OCI-LY7 (cell line): ENCODE measurements at regions of chr18 and their contacts with region 1.

Region 1: GRCh38 chr18:61635901-61636528 is 256.8 kb downstream of the RNF152 start:
- DNase-seq: peak; percentile 31
- H3K4me3 ChIP-seq: no peak overlapping the region
- H3K27ac ChIP-seq: no peak overlapping the region
- H3K4me1 ChIP-seq: no peaks in the 10 kb centered on the region
- CTCF ChIP-seq: peak; percentile 77

Region 2: DNA sequence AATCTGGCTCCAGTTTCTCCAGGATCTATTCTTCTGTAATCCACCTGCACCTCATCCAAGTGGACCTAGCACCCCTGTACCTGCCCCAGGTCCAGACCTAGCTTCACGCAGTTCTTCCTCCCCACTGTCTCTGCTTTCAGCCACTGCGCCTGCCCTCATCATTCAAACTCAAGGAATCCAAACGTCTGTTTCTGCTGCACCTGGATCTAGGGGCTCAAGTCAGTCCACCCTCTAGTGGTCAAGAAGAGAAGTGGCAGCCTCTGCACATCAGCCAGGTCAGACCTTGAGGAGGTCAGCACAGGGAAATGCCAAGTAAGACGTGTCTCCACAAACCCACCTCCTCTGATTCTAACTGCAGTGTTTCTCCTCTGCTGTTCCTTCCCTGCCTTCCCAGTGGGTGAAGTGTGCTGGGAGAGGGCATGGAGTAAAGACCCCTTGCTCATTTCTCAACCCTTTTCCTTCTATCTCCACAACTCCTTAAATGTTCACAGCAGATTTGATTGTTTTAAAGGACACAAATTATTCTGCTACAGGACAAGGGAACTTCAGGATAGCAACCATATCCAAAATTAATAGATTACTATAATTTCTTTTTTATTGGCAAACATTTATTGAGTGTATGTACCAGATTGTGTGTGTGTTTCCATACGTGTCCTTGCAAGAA is 265.4 kb after region 1 on chr18:
- CTCF ChIA-PET with region 1: no interaction called
- POLR2A ChIA-PET with region 1: no interaction called
- intact Hi-C with region 1: loop called (anchors 10 kb)
- DNase-seq: peak; percentile 32
- H3K4me3 ChIP-seq: no peak overlapping the region
- H3K27ac ChIP-seq: no peak overlapping the region
- H3K4me1 ChIP-seq: no peaks in the 10 kb centered on the region
- CTCF ChIP-seq: peak; percentile 74

Region 3: DNA sequence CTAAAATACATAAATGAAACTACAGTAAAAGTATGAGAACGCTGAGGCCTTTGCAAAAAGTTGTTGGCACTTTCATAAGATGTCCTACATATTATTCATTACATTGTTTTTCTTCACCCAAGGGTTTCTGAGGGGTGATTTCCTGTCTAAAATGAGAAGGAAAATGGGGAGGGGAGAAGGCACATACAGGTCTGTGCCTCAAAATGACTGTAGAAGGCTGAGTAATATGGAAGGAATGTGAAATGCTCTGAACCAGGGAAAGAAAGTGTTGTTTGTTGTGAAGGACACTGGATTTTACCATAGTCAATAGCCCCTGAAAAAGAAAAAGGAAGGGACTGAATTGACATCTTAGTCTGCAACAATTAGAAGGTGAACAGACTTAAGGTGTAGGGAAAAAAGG is 356.3 kb after region 1 on chr18:
- CTCF ChIA-PET with region 1: no interaction called
- POLR2A ChIA-PET with region 1: no interaction called
- intact Hi-C with region 1: no loop called
- DNase-seq: no peak
- H3K4me3 ChIP-seq: no peak overlapping the region
- H3K27ac ChIP-seq: no peak overlapping the region
- H3K4me1 ChIP-seq: no peaks in the 10 kb centered on the region
- CTCF ChIP-seq: no peak

Region 4: DNA sequence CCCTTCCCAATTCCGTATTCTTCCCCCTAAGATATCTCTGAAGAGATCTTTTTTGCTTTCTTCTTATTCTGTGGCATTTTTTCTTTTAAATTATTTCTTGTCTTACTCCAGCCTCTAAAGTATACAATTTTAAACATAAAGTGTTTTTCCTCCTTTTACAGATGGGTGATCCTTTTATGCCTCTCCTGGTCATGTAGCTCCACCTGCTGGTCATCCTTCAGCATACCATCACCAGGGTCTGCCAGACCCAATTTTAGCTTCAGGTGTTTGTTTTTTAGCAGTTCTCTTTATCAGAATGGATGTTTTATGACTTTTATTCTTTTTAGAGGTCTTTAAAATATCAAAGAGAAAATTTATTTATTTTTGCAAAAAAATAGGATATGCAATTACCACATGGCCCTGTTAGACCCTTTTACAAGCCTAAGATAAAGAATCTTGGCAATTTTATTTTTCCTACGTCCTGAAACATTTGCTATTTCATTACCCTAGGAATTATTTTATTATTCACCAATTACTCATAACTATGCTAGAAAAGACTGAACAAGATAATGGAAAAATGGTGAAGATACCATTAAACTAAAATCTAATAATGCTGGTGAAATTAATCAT is 495.4 kb after region 1 on chr18:
- CTCF ChIA-PET with region 1: no interaction called
- POLR2A ChIA-PET with region 1: no interaction called
- intact Hi-C with region 1: loop called (anchors 1 kb)
- DNase-seq: peak; percentile 50
- H3K4me3 ChIP-seq: no peak overlapping the region
- H3K27ac ChIP-seq: no peak overlapping the region
- H3K4me1 ChIP-seq: no peaks in the 10 kb centered on the region
- CTCF ChIP-seq: peak; percentile 88